ENCODE measurements at regions of chr12 and their contacts with region 1.

Region 1: DNA sequence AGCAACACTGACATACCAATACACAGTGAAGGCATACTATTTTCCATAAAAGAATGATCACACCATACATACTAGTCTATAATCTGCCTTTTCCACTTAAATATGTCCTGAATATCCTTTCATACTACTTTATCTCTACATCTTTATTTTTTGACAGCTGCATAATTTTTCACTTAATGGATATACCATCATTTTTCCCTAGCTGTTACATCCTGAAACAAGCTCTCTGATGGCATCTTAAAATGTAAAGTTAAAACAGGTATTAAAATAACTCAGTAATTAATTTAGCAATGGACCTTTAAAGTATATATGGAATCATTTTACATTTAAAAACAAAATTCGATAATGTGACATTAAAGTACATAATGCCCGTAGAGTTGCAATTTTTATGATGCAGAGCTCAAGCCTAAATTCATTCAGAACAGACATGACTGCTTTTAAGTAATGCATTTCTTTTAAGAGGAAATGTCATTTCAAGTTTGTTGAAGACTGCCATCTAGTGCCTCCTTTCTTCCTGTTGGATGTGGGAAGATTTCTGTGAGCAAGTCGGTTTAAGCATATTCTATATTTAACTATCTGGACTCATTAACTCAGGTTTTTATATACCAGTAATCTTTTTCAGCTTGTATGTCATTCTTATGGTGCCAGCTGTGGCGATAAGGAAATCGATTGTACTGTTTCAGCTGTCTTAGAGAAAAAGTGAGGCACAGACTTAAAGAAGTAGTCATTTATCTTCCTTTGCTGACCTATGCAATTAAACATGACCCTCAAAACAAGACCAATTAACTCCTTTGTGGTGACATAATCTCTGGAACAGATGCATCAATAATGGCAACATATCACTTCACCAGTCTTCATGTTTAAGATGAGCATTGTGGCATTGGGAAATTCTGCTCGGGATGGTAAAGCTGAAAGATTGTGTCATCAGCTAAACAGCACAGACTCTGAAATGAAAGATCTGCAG is 20.3 kb downstream of the PRICKLE1 start:
- DNase-seq: peak in 1 of 2 donors; percentile 46
- ATAC-seq: peak in 7 of 8 donors; percentile 29 to 73 (median 64)
- H3K4me3 ChIP-seq: no peak overlapping the region
- H3K27ac ChIP-seq: peak overlapping the region in 1 of 10 donors; percentile 9
- H3K4me1 ChIP-seq: peaks cover 0 to 53% (median 18%) of the 10 kb centered on the region in 9 donors
- H3K27me3 ChIP-seq: no peaks in the 10 kb centered on the region
- CTCF ChIP-seq: peak; percentile 38 to 78 (median 62)

Region 2: GRCh38 chr12:42135264-42135814 is 433.9 kb before region 1 on chr12:
- intact Hi-C with region 1: loop called in 5 of 10 experiments (anchors 5 to 10 kb)
- DNase-seq: no peak
- ATAC-seq: no peak
- H3K4me3 ChIP-seq: no peak overlapping the region
- H3K27ac ChIP-seq: no peak overlapping the region
- H3K4me1 ChIP-seq: peaks cover 4 to 19% (median 9%) of the 10 kb centered on the region in 9 donors
- H3K27me3 ChIP-seq: no peaks in the 10 kb centered on the region
- CTCF ChIP-seq: no peak

Region 3: DNA sequence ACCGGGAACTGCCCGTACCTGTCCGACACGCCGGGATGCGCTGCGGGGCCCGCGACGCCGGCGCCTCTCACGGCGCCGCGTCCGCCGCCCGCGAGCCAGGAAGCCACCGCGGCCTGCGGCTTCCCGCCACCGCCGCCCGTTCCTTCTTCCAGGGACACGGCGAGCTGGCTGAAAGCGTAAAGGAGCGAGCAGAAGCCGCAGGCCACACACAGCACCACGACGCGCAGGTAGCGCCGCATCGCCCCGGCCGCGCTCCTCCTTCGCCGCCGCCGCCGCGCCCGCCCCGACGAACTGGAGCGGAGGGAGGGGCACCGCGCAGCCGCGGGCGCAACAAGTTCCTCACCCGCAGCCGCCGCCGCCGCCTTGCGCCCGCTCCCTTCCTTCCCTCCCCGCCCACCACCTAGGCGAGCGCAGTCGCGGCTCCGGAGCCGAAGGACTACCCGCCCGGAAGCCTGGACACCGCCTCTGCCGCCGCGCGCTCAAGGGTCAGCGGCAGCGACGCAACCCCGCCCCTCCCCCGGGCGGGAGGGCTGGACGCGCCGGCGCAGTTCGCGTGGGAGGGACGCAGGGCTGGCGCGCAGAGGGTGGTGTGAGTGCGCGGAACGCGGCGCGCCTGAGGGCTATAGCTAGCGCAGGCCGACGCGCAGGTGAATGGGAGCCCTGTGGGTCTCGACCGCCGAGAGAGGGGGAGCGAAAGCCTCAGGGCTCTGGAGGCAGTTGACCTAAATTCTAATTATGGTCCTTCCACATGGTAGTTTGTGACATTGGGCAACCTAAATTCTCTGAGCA is 424.6 kb before region 1 on chr12 and contains the start of gene GXYLT1:
- intact Hi-C with region 1: loop called in 5 of 10 experiments (anchors 5 to 10 kb)
- DNase-seq: peak; percentile 93 to 95
- ATAC-seq: peak; percentile 98 to 100 (median 99)
- H3K4me3 ChIP-seq: peak within 1 kb of the TSS; percentile 49 to 87 (median 76)
- H3K27ac ChIP-seq: peak within 1 kb of the TSS; percentile 55 to 91 (median 88)
- H3K4me1 ChIP-seq: peaks cover 0 to 40% (median 29%) of the 10 kb centered on the region in 9 donors
- H3K27me3 ChIP-seq: no peaks in the 10 kb centered on the region
- CTCF ChIP-seq: peak in 2 of 9 donors; percentile 13 to 17
- total RNA-seq, gene GXYLT1: 4.2 to 7.8 (median 5.7) TPM

Region 4: GRCh38 chr12:42356344-42356743 is 212.9 kb before region 1 on chr12:
- intact Hi-C with region 1: loop called in 1 of 10 experiments (anchors 10 kb)
- DNase-seq: no peak
- ATAC-seq: peak in 5 of 8 donors; percentile 48 to 96 (median 65)
- H3K4me3 ChIP-seq: no peak overlapping the region
- H3K27ac ChIP-seq: peak overlapping the region in 8 of 10 donors; percentile 5 to 78 (median 42)
- H3K4me1 ChIP-seq: peaks cover 0 to 14% (median 3%) of the 10 kb centered on the region in 9 donors
- H3K27me3 ChIP-seq: no peaks in the 10 kb centered on the region
- CTCF ChIP-seq: no peak

Region 5: GRCh38 chr12:42482445-42483237 is 86.6 kb before region 1 on chr12:
- intact Hi-C with region 1: loop called (anchors 1 to 5 kb)
- DNase-seq: peak; percentile 76 to 86
- ATAC-seq: peak; percentile 87 to 93 (median 88)
- H3K4me3 ChIP-seq: peak overlapping the region; percentile 77 to 95 (median 84)
- H3K27ac ChIP-seq: peak overlapping the region; percentile 86 to 97 (median 93)
- H3K4me1 ChIP-seq: peaks cover 0 to 77% (median 44%) of the 10 kb centered on the region in 9 donors
- H3K27me3 ChIP-seq: peaks cover 0 to 44% (median 0%) of the 10 kb centered on the region in 7 donors
- CTCF ChIP-seq: peak; percentile 86 to 97 (median 94)

Region 6: GRCh38 chr12:43338848-43339526 is 769.8 kb after region 1 on chr12:
- intact Hi-C with region 1: loop called in 1 of 10 experiments (anchors 5 kb)
- DNase-seq: peak in 1 of 2 donors; percentile 31
- ATAC-seq: peak; percentile 93 to 100 (median 96)
- H3K4me3 ChIP-seq: no peak overlapping the region
- H3K27ac ChIP-seq: peak overlapping the region in 6 of 10 donors; percentile 28 to 71 (median 48)
- H3K4me1 ChIP-seq: peaks cover 0 to 19% (median 16%) of the 10 kb centered on the region in 9 donors
- H3K27me3 ChIP-seq: no peaks in the 10 kb centered on the region
- CTCF ChIP-seq: peak; percentile 22 to 87 (median 70)